Caco-2 (cell line): ENCODE measurements at regions of chr7 and their contacts with region 1.

Region 1: DNA sequence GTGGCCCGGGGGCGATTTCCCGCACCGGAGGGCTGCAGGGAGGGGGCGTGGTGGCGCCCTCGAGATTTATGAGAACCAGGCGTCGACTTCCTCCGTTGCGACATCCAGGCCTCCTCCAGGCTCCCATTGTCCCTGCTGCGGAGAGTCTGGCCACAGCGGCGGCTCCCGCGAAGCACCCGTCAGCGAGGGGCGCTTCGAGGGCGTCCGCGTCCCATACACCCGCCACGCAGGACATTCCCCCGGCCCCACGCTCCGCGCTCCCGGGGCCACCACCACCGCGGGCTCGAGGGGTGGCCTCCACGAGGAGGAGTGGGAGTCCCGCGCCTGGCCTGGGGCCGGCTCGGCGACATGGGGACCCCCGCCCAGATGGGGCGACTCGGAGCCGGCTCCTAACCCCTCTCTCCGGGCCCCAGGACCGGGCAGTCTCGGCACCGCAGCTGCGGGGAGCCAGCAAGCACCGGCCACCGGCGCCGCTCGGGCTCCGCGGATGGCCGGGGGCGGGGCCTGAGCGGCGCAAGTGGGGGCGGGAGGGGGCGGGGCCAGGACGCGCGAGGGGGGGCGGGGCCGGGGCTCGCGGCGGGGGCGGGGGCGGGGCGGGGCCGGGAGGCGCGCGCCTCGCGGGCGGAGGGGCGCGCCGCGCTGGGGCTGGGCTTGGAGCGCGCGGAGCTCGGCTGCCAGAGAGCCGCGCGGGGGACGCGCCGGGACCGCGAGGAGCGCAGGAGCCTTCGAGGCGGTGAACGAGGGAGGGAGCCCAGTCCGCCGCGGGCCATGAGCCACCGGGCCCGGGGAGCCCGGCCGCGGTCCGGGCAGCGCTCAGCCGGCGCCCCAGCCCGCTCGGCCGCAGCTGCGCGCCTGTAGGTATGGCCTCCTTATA is at the start of gene SH2B2:
- DNase-seq: peak; percentile 78 to 79
- H3K4me3 ChIP-seq: peak within 1 kb of the TSS; percentile 99
- H3K4me3 Mint-ChIP-seq: peak within 1 kb of the TSS; percentile 71
- H3K27ac Mint-ChIP-seq: peak within 1 kb of the TSS; percentile 45
- H3K4me1 ChIP-seq: peaks cover 3% of the 10 kb centered on the region; the same call in 1 of the 2 replicates
- H3K4me1 Mint-ChIP-seq: peaks cover 7% of the 10 kb centered on the region
- H3K27me3 ChIP-seq: no peaks in the 10 kb centered on the region
- H3K27me3 Mint-ChIP-seq: no peaks in the 10 kb centered on the region
- CTCF ChIP-seq: no peak
- total RNA-seq, gene SH2B2: 8.1 and 10.6 TPM in 2 replicates

Region 2: DNA sequence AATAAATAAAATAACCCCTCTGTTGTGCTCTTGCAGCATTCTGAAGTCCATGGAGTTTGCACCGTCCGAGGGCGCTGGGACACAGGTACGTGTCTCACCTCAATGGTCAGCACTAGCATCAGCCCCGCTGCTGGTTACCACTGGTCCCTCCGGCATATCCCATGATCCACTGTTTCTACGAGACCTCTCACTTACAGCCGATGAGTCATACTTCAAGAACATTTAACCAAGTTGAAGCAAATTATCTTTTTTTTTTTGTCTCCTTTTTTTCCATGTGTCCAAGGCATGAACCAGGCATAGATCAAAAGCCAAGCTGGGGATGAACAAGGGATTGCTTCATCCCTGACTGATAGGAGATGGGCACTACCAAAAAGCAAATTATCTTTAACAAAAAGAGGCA is 92.7 kb before region 1 on chr7:
- CTCF ChIA-PET with region 1: no interaction called
- POLR2A ChIA-PET with region 1: no interaction called
- intact Hi-C with region 1: no loop called
- DNase-seq: no peak
- H3K4me3 ChIP-seq: no peak overlapping the region
- H3K4me3 Mint-ChIP-seq: no peak overlapping the region
- H3K27ac Mint-ChIP-seq: peak overlapping the region; percentile 22
- H3K4me1 ChIP-seq: no peaks in the 10 kb centered on the region
- H3K4me1 Mint-ChIP-seq: no peaks in the 10 kb centered on the region
- H3K27me3 ChIP-seq: no peaks in the 10 kb centered on the region
- H3K27me3 Mint-ChIP-seq: no peaks in the 10 kb centered on the region
- CTCF ChIP-seq: no peak

Region 3: DNA sequence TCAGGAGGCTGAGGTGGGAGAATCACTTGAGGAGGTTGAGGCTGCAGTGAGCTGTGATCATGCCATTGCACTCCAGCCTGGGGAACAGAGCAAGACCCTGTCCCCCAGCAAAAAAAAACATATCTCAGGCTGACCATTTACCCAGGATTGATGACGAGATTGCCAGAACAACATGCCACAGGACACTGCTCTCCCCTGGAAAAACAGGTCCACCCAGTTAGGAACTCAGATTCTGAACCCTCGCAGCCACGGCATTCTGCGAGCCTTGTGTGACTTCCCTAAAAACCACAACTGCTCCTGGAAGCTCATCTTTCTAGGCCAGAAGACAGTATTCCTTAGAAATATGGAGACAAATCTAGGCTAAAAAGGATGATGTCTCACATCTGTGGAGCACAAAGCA is 41.9 kb before region 1 on chr7:
- CTCF ChIA-PET with region 1: no interaction called
- POLR2A ChIA-PET with region 1: no interaction called
- intact Hi-C with region 1: no loop called
- DNase-seq: no peak
- H3K4me3 ChIP-seq: no peak overlapping the region
- H3K4me3 Mint-ChIP-seq: no peak overlapping the region
- H3K27ac Mint-ChIP-seq: peak overlapping the region; percentile 53
- H3K4me1 ChIP-seq: no peaks in the 10 kb centered on the region
- H3K4me1 Mint-ChIP-seq: no peaks in the 10 kb centered on the region
- H3K27me3 ChIP-seq: no peaks in the 10 kb centered on the region
- H3K27me3 Mint-ChIP-seq: no peaks in the 10 kb centered on the region
- CTCF ChIP-seq: no peak

Region 4: GRCh38 chr7:102260856-102261255 is 25.6 kb before region 1 on chr7:
- CTCF ChIA-PET with region 1: no interaction called
- POLR2A ChIA-PET with region 1: no interaction called
- intact Hi-C with region 1: no loop called
- DNase-seq: no peak
- H3K4me3 ChIP-seq: no peak overlapping the region
- H3K4me3 Mint-ChIP-seq: no peak overlapping the region
- H3K27ac Mint-ChIP-seq: no peak overlapping the region
- H3K4me1 ChIP-seq: no peaks in the 10 kb centered on the region
- H3K4me1 Mint-ChIP-seq: no peaks in the 10 kb centered on the region
- H3K27me3 ChIP-seq: no peaks in the 10 kb centered on the region
- H3K27me3 Mint-ChIP-seq: no peaks in the 10 kb centered on the region
- CTCF ChIP-seq: no peak

Region 5: GRCh38 chr7:102321351-102322177 is 35.1 kb after region 1 on chr7:
- CTCF ChIA-PET with region 1: no interaction called
- POLR2A ChIA-PET with region 1: no interaction called
- intact Hi-C with region 1: loop called (anchors 5 kb)
- DNase-seq: peak in 1 of 2 experiments; percentile 50
- H3K4me3 ChIP-seq: peak overlapping the region; percentile 30
- H3K4me3 Mint-ChIP-seq: peak overlapping the region; percentile 57
- H3K27ac Mint-ChIP-seq: no peak overlapping the region
- H3K4me1 ChIP-seq: peaks cover 9% of the 10 kb centered on the region; the same call in 1 of the 2 replicates
- H3K4me1 Mint-ChIP-seq: no peaks in the 10 kb centered on the region
- H3K27me3 ChIP-seq: no peaks in the 10 kb centered on the region
- H3K27me3 Mint-ChIP-seq: peaks cover 3% of the 10 kb centered on the region
- CTCF ChIP-seq: no peak